ENCODE measurements at regions of chr5 and their contacts with region 1.

Region 1: DNA sequence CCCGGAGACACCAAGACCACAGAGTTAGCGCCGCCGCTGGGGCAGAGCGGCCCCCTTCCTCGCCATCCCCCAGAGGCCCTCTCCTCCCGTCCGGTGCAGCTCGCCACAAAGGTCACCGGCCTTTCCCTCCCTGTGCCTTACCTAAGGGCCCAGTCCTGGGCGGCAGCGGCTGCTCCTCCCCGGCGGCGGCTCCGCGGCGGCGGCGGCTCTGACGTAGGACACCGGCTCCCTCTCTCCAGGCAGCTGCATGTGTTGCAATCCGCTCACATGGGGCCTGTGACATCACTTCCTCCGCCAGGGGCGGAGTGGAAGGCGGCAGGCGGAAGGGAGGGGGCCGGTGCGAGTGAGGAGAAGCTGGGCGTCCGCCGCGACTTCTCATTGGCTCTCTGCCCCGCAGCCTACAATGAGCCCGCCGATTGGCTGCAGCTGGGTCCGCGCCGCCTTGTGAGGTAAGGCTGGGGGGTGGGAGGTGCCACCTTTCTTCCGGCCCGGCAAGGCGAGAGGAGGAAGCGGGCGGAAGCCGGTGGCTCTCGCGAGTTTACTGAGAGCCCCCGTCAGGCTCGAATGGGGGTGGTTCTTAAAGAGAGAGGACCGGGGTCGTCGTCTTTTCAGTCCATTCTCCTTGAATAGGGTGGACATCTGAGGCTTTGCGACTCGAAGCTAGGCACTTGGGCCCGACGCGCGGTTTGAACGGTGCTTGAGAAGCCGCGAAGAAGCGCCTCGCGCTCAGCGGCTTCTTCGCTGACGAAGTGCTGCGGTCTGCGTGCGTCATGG is at the start of gene ETF1:
- DNase-seq: peak; percentile 97 to 100 (median 100)
- ATAC-seq: peak; percentile 86 to 87
- H3K4me3 Mint-ChIP-seq: peak within 1 kb of the TSS; percentile 94 to 100 (median 100)
- H3K27ac Mint-ChIP-seq: peak within 1 kb of the TSS; percentile 99 to 100 (median 100)
- H3K4me1 Mint-ChIP-seq: peaks cover 35 to 79% (median 74%) of the 10 kb centered on the region in 4 donors
- H3K27me3 Mint-ChIP-seq: no peaks in the 10 kb centered on the region
- polyA plus RNA-seq, gene ETF1: 21.5 to 27.5 (median 24.1) TPM

Region 2: DNA sequence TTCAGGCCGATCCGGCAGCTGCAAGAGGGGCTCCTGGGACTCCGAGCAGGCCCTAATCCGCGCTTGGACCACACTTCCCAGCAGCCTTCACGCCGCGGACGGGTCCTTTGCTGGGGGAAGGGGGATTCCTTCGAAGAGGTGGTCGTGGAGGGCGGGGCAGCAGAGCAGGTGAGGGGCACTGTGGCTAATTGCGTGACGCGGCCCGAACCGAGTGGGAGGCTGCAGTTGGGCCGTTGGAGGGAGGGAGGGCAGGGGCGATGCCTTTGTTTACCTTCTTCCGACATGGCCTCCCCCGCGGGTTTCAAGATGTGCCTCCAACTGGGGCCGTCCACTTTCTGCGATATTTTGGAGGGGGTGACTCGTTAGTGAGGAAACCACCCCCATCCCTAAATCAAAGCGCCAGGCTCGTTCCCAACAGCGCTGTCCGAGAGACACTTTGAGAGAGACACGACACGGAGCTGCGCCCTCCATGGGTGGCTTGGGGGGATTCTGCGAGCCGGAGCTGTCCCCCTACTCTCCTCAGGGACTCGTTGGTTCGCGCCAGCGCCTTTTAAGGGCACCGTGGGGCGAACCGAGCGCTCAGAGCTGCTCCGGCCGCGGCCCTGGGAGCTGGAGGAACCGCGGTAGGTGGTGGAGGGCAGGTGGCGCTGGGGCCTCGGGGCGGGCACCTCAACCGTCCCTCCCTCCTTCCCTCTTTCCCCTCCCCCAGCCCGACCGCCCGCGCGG is 205.3 kb before region 1 on chr5 and contains the start of gene FAM53C:
- POLR2A ChIA-PET with region 1: interaction called, 15 read pairs
- DNase-seq: peak; percentile 82 to 100 (median 94)
- ATAC-seq: peak; percentile 86 to 87
- H3K4me3 Mint-ChIP-seq: peak within 1 kb of the TSS; percentile 89 to 97 (median 93)
- H3K27ac Mint-ChIP-seq: peak within 1 kb of the TSS; percentile 98 to 100 (median 100)
- H3K4me1 Mint-ChIP-seq: peaks cover 22 to 42% (median 41%) of the 10 kb centered on the region in 4 donors
- H3K27me3 Mint-ChIP-seq: no peaks in the 10 kb centered on the region
- polyA plus RNA-seq, gene FAM53C: 18.6 to 22.2 (median 20.3) TPM

Region 3: DNA sequence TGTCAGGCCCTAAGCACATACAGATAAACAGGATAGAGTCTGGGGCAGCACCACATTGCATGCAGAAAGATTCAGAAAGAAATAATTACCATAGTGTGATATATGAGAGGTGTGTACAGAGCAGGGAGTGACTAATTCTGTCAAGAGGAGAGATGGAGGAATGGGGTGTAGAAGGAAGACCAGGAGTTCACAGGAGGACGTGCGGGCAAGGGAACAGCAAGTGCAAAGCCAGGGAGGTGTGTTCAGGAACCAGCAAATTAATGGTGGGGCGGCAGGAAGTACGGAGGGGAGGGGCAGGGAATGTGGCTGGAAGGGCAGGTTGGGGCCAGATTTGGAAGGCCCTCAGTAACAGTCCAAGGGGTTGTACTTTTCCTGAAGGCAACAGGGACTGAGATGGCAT is 60.5 kb before region 1 on chr5:
- POLR2A ChIA-PET with region 1: no interaction called
- DNase-seq: no peak
- ATAC-seq: no peak
- H3K4me3 Mint-ChIP-seq: no peak overlapping the region
- H3K27ac Mint-ChIP-seq: no peak overlapping the region
- H3K4me1 Mint-ChIP-seq: no peaks in the 10 kb centered on the region
- H3K27me3 Mint-ChIP-seq: peaks cover 0 to 5% (median 3%) of the 10 kb centered on the region in 5 donors

Region 4: DNA sequence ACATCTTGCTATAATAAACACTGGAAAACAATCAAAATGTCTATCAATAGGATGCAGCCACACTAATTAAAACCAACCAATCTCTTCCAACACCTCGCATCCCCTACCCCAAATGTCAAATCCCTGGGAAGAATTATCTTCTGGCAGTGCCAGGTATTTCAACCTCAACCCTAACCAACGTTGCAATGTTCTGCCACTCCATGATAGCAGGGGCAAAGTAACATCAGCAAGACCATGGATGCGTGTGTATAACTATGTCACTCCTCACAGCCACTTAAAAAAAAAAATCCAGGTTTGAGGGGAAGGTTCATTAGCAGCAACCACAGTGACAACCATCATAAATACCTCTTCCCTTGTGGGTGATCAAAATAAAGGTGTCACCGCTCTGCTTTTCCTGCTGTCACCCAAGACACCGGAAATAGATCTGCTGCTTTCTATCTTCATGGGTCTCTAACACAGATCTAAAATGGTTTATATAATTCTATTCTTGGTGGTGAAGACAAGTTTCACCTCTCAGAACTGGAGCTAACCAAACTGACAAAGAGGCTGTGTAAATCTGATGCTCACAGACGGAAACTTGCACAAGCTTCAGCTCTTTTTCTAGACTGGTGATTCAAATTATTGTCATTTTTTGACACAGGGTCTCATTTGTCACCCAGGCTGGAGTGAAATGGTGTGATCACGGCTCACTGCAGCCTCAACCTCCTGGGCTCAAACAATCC is 22.1 kb after region 1 on chr5:
- POLR2A ChIA-PET with region 1: interaction called, 10 read pairs
- DNase-seq: peak in 4 of 10 donors; percentile 33 to 70 (median 66)
- ATAC-seq: peak; percentile 74 to 89
- H3K4me3 Mint-ChIP-seq: peak overlapping the region in 9 of 10 donors; percentile 8 to 82 (median 64)
- H3K27ac Mint-ChIP-seq: peak overlapping the region; percentile 50 to 98 (median 90)
- H3K4me1 Mint-ChIP-seq: peaks cover 17 to 60% (median 52%) of the 10 kb centered on the region in 4 donors
- H3K27me3 Mint-ChIP-seq: no peaks in the 10 kb centered on the region

Measured in naive thymus-derived CD8-positive, alpha-beta T cell (primary cell).